Spleen (tissue), 13 donors: ENCODE measurements at regions of chr14 and their contacts with region 1.

Region 1: GRCh38 chr14:65412032-65412846 is at the start of gene FUT8:
- DNase-seq: peak; percentile 99
- H3K4me3 ChIP-seq: peak within 1 kb of the TSS; percentile 69 to 100 (median 87)
- H3K27ac ChIP-seq: peak within 1 kb of the TSS; percentile 91 to 97 (median 94)
- H3K4me1 ChIP-seq: peaks cover 9 to 47% (median 33%) of the 10 kb centered on the region in 6 donors
- H3K27me3 ChIP-seq: peaks cover 0 to 4% (median 0%) of the 10 kb centered on the region in 7 donors
- CTCF ChIP-seq: peak; percentile 15 to 67 (median 47)
- POLR2A ChIP-seq: peak; percentile 16 to 94 (median 88)
- total RNA-seq, gene FUT8: 41.9 to 75.1 (median 61.9) TPM

Region 2: DNA sequence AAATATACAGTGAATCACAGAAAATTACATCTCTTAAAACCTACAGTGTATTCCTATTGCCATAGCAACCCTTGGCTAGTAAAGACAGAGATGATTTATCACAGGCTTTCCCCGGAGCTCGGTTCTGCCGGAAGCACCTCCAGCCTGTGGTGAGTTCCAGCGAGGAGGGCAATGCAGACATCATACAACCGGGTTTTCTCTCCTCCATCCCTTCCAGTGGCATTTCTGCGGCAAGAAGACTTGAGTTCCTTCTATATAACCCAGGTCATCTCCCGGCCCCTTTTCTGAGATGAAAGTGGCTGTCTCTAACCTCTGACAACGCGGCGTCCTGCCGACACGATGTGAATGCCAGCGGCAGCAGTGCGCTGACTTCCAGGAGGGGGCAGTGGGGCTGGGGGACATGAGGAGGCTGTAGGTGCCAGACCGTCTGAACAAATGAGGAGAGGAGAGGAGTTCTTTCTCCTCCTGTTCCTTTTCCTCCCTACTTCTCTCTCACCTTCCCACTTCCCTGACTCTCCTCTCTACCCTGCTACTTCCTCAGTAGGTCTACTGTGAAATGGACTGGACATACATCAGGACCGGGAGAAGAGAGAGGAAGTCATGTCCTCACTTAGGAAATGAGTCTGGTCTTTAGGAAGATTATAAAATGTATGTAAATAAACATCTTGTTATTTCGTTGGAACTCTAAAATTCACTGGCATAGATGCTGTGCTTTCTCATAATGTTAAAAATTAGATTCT is 241.3 kb before region 1 on chr14:
- intact Hi-C with region 1: loop called (anchors 10 kb)
- DNase-seq: peak; percentile 84
- H3K4me3 ChIP-seq: peak overlapping the region in 6 of 8 donors; percentile 2 to 63 (median 20)
- H3K27ac ChIP-seq: no peak overlapping the region
- H3K4me1 ChIP-seq: peaks cover 0 to 17% (median 12%) of the 10 kb centered on the region in 6 donors
- H3K27me3 ChIP-seq: peaks cover 0 to 17% (median 0%) of the 10 kb centered on the region in 7 donors
- CTCF ChIP-seq: peak in 5 of 11 experiments; percentile 13 to 47 (median 29)
- POLR2A ChIP-seq: no peak

Region 3: DNA sequence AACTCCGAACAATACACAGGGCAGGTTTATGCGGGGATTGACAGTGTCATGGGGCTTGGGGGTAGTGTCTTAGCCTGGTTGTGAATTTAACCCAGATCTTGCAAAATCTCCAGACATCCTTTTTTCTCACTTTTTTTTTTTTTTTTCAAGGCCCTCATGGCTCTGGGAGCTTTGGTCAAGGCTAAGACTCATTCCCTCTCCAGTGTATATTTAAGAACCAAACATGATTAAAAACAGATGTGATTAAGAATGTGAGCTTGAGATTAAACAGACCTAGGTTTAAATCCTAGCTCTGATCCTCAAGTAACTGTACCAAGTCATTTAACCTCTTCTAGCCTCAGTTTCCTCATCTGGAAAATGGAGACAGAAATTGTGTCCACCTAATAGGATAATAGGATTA is 151.5 kb before region 1 on chr14:
- intact Hi-C with region 1: no loop called
- DNase-seq: no peak
- H3K4me3 ChIP-seq: no peak overlapping the region
- H3K27ac ChIP-seq: no peak overlapping the region
- H3K4me1 ChIP-seq: no peaks in the 10 kb centered on the region
- H3K27me3 ChIP-seq: no peaks in the 10 kb centered on the region
- CTCF ChIP-seq: no peak
- POLR2A ChIP-seq: no peak

Region 4: GRCh38 chr14:65750906-65751305 is 338.7 kb after region 1 on chr14:
- intact Hi-C with region 1: no loop called
- DNase-seq: no peak
- H3K4me3 ChIP-seq: no peak overlapping the region
- H3K27ac ChIP-seq: no peak overlapping the region
- H3K4me1 ChIP-seq: no peaks in the 10 kb centered on the region
- H3K27me3 ChIP-seq: no peaks in the 10 kb centered on the region
- CTCF ChIP-seq: no peak
- POLR2A ChIP-seq: no peak

Region 5: GRCh38 chr14:65824285-65824977 is 412.2 kb after region 1 on chr14:
- intact Hi-C with region 1: loop called (anchors 5 kb)
- DNase-seq: no peak
- H3K4me3 ChIP-seq: no peak overlapping the region
- H3K27ac ChIP-seq: no peak overlapping the region
- H3K4me1 ChIP-seq: peaks cover 0 to 6% (median 2%) of the 10 kb centered on the region in 6 donors
- H3K27me3 ChIP-seq: no peaks in the 10 kb centered on the region
- CTCF ChIP-seq: peak; percentile 82 to 96 (median 92)
- POLR2A ChIP-seq: no peak